ENCODE measurements at regions of chr3 and their contacts with region 1.

Region 1: GRCh38 chr3:163916596-163917554 is 1161.4 kb downstream of the SI start:
- DNase-seq: no peak
- H3K4me3 ChIP-seq: no peak overlapping the region
- H3K27ac ChIP-seq: no peak overlapping the region
- H3K4me1 ChIP-seq: no peaks in the 10 kb centered on the region
- H3K27me3 ChIP-seq: no peaks in the 10 kb centered on the region
- CTCF ChIP-seq: no peak
- EP300 ChIP-seq: no peak
- POLR2A ChIP-seq: no peak

Region 2: GRCh38 chr3:164390046-164390445 is 473.2 kb after region 1 on chr3:
- intact Hi-C with region 1: loop called in 1 of 4 experiments (anchors 10 kb)
- DNase-seq: no peak
- H3K4me3 ChIP-seq: no peak overlapping the region
- H3K27ac ChIP-seq: no peak overlapping the region
- H3K4me1 ChIP-seq: no peaks in the 10 kb centered on the region
- H3K27me3 ChIP-seq: no peaks in the 10 kb centered on the region
- CTCF ChIP-seq: no peak
- EP300 ChIP-seq: no peak
- POLR2A ChIP-seq: no peak

Measured in ovary (tissue), 10 donors.